Caki2 (cell line): ENCODE measurements at regions of chr16 and their contacts with region 1.

Region 1: GRCh38 chr16:997440-998051 is 16.0 kb downstream of the SOX8 start:
- DNase-seq: peak; percentile 50

Region 2: GRCh38 chr16:1125471-1125870 is 127.9 kb after region 1 on chr16:
- in situ Hi-C with region 1: loop called (anchors 25 kb)
- DNase-seq: peak; percentile 86